Colonic mucosa (tissue), 4 donors: ENCODE measurements at regions of chr5 and their contacts with region 1.

Region 1: GRCh38 chr5:109416882-109417281 is 7.1 kb upstream of the PJA2 start:
- DNase-seq: no peak
- H3K4me3 ChIP-seq: no peak overlapping the region
- H3K27ac ChIP-seq: no peak overlapping the region
- H3K4me1 ChIP-seq: no peaks in the 10 kb centered on the region
- H3K27me3 ChIP-seq: no peaks in the 10 kb centered on the region
- CTCF ChIP-seq: no peak

Region 2: GRCh38 chr5:109267283-109267682 is 149.6 kb before region 1 on chr5:
- intact Hi-C with region 1: no loop called
- DNase-seq: no peak
- H3K4me3 ChIP-seq: no peak overlapping the region
- H3K27ac ChIP-seq: no peak overlapping the region
- H3K4me1 ChIP-seq: no peaks in the 10 kb centered on the region
- H3K27me3 ChIP-seq: no peaks in the 10 kb centered on the region
- CTCF ChIP-seq: no peak

Region 3: DNA sequence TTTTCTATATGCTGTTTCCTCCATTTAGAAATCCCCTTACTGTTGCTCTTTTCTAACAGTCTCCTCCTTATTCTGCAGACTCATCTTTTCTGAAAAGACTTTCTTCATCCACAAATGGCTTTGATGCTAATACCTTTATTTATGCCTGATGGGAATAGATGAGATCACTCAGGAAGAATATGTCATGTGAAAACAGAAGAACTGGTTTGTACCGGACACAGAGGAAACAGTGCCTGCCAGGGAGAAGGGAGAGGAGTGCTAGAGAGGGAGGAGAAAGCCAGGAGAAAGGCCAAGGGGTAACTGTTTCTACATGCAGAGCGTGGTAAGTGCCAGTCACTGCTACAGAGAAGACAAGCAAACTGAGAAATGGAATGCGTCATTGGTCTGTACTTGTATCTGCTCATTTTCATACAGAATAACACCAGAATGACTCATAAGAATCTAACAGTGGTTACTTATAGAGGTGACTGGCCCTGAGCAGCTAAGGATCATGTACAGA is 38.8 kb after region 1 on chr5:
- intact Hi-C with region 1: loop called (anchors 5 kb)
- DNase-seq: no peak
- H3K4me3 ChIP-seq: no peak overlapping the region
- H3K27ac ChIP-seq: no peak overlapping the region
- H3K4me1 ChIP-seq: no peaks in the 10 kb centered on the region
- H3K27me3 ChIP-seq: no peaks in the 10 kb centered on the region
- CTCF ChIP-seq: no peak